ENCODE measurements at regions of chr11 and their contacts with region 1.

Region 1: DNA sequence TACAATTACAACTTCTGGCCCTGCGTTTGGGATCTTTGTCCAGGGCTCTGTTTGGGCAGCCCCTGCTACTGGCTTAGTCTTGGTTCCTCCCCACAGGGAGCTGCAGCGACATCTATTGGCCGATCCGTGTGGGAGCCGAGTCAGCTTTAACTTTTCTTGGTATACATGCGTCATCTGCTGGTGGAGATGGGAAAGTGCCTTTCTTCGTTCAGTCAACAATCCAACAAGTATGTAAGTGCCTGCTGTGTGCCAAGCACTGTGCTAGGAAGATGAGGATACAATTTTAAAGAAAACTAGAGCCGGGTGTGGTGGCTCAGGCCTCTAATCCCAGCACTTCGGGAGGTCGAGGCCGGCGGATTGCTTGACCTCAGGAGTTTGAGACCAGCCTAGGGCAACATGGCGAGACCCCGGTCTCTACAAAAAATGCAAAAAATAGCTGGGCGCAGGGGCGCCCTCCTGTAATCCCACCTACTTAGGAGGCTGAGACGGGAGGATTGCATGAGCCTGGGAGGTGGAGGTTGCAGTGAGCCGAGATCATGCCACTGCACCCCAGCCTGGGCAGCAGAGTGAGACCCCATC is 8.2 kb downstream of the TPBGL start:
- H3K4me3 ChIP-seq: no peak overlapping the region
- H3K27ac ChIP-seq: no peak overlapping the region
- H3K4me1 ChIP-seq: no peaks in the 10 kb centered on the region
- CTCF ChIP-seq: peak; percentile 97

Region 2: GRCh38 chr11:75022759-75023396 is 225.9 kb before region 1 on chr11:
- CTCF ChIA-PET with region 1: interaction called, 90 read pairs
- POLR2A ChIA-PET with region 1: no interaction called
- H3K4me3 ChIP-seq: no peak overlapping the region
- H3K27ac ChIP-seq: no peak overlapping the region
- H3K4me1 ChIP-seq: no peaks in the 10 kb centered on the region
- CTCF ChIP-seq: peak; percentile 67; the same call in 1 of the 2 replicates

Region 3: DNA sequence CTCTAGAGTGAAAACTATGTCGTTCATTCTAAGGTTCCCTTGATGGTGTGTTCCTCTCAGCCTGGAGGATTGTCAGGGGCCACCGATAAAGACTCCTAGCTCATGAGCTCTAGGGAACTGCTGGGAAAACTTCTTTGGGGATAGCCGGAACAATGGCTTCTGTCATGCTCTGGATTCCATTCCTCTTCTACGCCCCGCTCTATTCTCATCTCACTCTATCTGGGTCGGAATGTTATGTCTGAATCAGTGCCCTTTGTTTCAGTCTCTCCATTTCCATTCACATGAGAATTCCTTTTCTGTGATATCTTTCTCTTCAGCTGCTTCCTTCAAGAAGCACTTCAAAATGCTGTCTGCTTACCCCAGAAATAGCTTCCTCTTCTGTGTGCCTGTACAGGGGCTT is 114.8 kb before region 1 on chr11:
- CTCF ChIA-PET with region 1: interaction called, 273 read pairs
- POLR2A ChIA-PET with region 1: no interaction called
- H3K4me3 ChIP-seq: no peak overlapping the region
- H3K27ac ChIP-seq: no peak overlapping the region
- H3K4me1 ChIP-seq: no peaks in the 10 kb centered on the region
- CTCF ChIP-seq: no peak

Region 4: GRCh38 chr11:75204685-75205563 is 43.9 kb before region 1 on chr11:
- CTCF ChIA-PET with region 1: interaction called, 22 read pairs
- POLR2A ChIA-PET with region 1: no interaction called
- H3K4me3 ChIP-seq: no peak overlapping the region
- H3K27ac ChIP-seq: no peak overlapping the region
- H3K4me1 ChIP-seq: no peaks in the 10 kb centered on the region
- CTCF ChIP-seq: no peak

Region 5: GRCh38 chr11:75262961-75263852 is 14.4 kb after region 1 on chr11:
- CTCF ChIA-PET with region 1: interaction called, 18 read pairs
- POLR2A ChIA-PET with region 1: no interaction called
- H3K4me3 ChIP-seq: no peak overlapping the region
- H3K27ac ChIP-seq: no peak overlapping the region
- H3K4me1 ChIP-seq: no peaks in the 10 kb centered on the region
- CTCF ChIP-seq: no peak

Region 6: GRCh38 chr11:75399344-75400145 is 150.8 kb after region 1 on chr11 and contains the start of gene RPS3:
- CTCF ChIA-PET with region 1: no interaction called
- POLR2A ChIA-PET with region 1: no interaction called
- H3K4me3 ChIP-seq: peak within 1 kb of the TSS; percentile 94
- H3K27ac ChIP-seq: peak within 1 kb of the TSS; percentile 99
- H3K4me1 ChIP-seq: peaks cover 4% of the 10 kb centered on the region
- CTCF ChIP-seq: peak; percentile 91